ENCODE measurements at regions of chr17 and their contacts with region 1.

Region 1: DNA sequence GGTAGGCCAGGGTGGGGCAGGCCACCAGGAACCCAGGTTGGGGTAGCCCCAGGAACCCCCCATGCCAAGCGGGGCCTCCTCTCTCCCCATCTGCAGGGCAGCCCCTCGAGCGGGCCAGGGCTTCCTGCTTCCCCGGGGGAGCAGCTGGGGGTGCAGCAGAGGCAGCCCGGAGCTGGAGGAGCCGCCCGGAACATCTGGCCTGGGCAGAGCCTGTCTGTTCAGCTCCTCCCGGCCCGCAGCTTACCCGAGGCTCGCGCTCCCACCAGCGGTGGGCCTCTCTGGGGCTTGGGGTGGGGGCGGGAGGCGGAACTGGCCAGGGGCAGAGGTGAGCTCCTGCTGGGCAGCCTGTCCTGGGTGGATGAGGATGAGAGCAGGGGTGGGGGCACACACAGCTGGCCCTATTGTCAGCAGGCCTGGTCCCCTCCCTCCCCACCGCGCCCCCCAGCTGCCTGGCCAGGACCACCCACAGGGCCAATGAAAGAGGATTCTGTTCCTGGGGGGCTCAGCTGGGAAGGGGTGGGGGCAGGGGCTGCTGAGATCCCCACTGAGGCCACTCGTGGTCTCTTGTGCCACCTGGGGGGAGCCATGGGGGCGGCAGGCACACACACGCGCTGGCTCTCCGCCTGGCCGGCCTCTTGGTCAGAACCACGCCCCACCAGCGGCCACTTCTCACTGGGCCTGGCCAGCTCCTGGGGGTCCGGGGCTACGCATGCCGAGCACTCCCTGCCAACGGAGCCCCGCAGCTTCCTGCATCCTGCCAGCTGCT is 34.7 kb downstream of the BAHCC1 start:
- DNase-seq: no peak
- H3K4me3 Mint-ChIP-seq: no peak overlapping the region
- H3K27ac Mint-ChIP-seq: no peak overlapping the region
- H3K4me1 Mint-ChIP-seq: peaks cover 3% of the 10 kb centered on the region
- H3K27me3 Mint-ChIP-seq: peaks cover 25% of the 10 kb centered on the region

Region 2: DNA sequence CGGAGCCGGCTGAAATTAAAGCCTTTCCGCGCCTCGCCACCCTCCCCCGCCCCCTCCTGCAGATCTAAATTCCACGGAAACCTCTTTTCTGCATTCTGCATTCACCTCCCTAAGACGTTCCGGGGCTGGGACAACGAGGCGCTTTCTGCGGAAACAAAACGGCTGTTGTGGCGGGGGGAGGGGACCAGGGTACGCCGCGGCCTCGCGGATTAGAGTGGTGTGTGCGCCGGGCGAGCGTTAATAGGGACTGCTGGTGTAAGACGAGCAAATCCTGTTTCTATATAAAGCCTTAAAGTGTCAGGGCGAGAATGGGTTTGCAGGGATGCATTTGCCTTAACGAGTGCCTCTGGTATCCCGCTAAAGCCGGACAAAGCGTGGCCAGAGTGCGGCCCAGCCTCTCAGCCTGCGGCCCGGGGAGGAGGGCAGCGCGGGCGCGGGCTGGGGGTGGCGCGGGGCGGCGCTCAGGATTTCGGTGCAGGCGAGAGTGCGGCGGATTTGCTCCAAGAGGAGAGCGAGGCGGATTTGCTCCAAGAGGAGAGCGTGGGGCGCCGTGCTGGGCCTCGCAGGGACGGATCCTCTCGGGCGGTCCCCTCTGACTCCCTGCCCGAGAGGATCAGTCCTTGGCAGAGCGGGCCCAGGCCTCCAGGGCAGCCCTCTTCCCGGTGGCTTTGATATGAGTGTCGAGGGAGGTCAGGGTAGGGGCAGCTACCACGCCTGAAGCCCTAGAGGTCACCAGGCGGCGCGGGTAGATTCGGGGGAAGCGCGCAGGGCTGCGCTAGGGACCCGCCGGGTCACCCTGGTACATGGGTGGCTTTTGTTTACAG is 29.6 kb before region 1 on chr17:
- CTCF ChIA-PET with region 1: no interaction called
- POLR2A ChIA-PET with region 1: no interaction called
- intact Hi-C with region 1: loop called (anchors 1 kb)
- DNase-seq: peak; percentile 34
- H3K4me3 Mint-ChIP-seq: peak overlapping the region; percentile 59
- H3K27ac Mint-ChIP-seq: no peak overlapping the region
- H3K4me1 Mint-ChIP-seq: peaks cover 14% of the 10 kb centered on the region
- H3K27me3 Mint-ChIP-seq: peaks cover 53% of the 10 kb centered on the region